K562 (cell line): ENCODE measurements at regions of chr20 and their contacts with region 1.

Region 1: DNA sequence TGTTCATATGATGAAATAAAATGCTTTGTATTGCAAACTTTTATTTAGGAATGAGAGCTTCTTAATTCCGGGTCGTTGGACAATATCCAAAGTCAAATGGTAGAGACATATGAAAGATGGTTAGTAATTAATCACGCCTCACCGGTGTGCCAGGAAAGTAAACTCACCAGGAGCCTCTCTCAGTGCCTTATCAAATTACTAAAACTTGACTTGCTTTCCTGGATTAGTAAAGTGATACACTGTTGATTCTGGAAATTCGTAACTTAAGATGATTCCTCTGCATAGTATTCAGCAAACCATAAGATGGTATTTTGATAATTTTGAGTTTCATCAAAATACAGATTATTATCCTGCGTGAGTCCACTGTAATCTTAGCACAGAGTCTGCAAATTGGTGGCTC is 115.2 kb downstream of the PAX1 start:
- DNase-seq: no peak
- ATAC-seq: no peak
- H3K4me3 ChIP-seq: no peak overlapping the region
- H3K27ac ChIP-seq: no peak overlapping the region
- H3K4me1 ChIP-seq: no peaks in the 10 kb centered on the region
- H3K27me3 ChIP-seq: no peaks in the 10 kb centered on the region
- CTCF ChIP-seq: no peak
- EP300 ChIP-seq: no peak
- POLR2A ChIP-seq: no peak
- RAD21 ChIP-seq: no peak

Region 2: GRCh38 chr20:21027569-21027968 is 793.1 kb before region 1 on chr20:
- CTCF ChIA-PET with region 1: no interaction called
- POLR2A ChIA-PET with region 1: no interaction called
- in situ Hi-C with region 1: no loop called
- intact Hi-C with region 1: no loop called
- DNase-seq: peak in 2 of 4 experiments; percentile 9 to 10
- ATAC-seq: peak; percentile 81
- H3K4me3 ChIP-seq: no peak overlapping the region
- H3K27ac ChIP-seq: no peak overlapping the region
- H3K4me1 ChIP-seq: peaks cover 0 to 5% of the 10 kb centered on the region in 2 experiments; a peak in 2 of 5 replicates
- H3K27me3 ChIP-seq: no peaks in the 10 kb centered on the region; a peak in 1 of 5 replicates
- CTCF ChIP-seq: peak in 2 of 3 experiments; percentile 21 to 39; a peak in 2 of 6 replicates
- EP300 ChIP-seq: no peak
- POLR2A ChIP-seq: no peak
- RAD21 ChIP-seq: no peak

Region 3: GRCh38 chr20:21719592-21720214 is 101.0 kb before region 1 on chr20:
- CTCF ChIA-PET with region 1: no interaction called
- POLR2A ChIA-PET with region 1: no interaction called
- in situ Hi-C with region 1: loop called (anchors 5 kb)
- intact Hi-C with region 1: no loop called
- DNase-seq: peak; percentile 41 to 53 (median 47)
- ATAC-seq: 0 out of 3 replicates have a peak, but pooled peaks have one; percentile 51
- H3K4me3 ChIP-seq: no peak overlapping the region
- H3K27ac ChIP-seq: no peak overlapping the region
- H3K4me1 ChIP-seq: no peaks in the 10 kb centered on the region
- H3K27me3 ChIP-seq: peaks cover 0 to 9% of the 10 kb centered on the region in 2 experiments; a peak in 2 of 5 replicates
- CTCF ChIP-seq: peak; percentile 39 to 63 (median 53); a peak in 5 of 6 replicates
- EP300 ChIP-seq: no peak
- POLR2A ChIP-seq: no peak
- RAD21 ChIP-seq: peak in 1 of 2 experiments; percentile 54; a peak in 2 of 4 replicates